ENCODE measurements at regions of chr7 and their contacts with region 1.

Region 1: GRCh38 chr7:66114793-66115649 is at the start of gene CRCP:
- DNase-seq: peak; percentile 87
- H3K4me3 Mint-ChIP-seq: peak within 1 kb of the TSS; percentile 99
- H3K27ac Mint-ChIP-seq: peak within 1 kb of the TSS; percentile 93
- H3K4me1 Mint-ChIP-seq: peaks cover 43% of the 10 kb centered on the region
- H3K27me3 Mint-ChIP-seq: no peaks in the 10 kb centered on the region
- total RNA-seq, gene CRCP: 18.5 to 19.6 TPM

Region 2: GRCh38 chr7:65872776-65873581 is 242.0 kb before region 1 on chr7 and contains the start of gene VKORC1L1:
- CTCF ChIA-PET with region 1: no interaction called
- intact Hi-C with region 1: loop called (anchors 5 kb)
- DNase-seq: peak; percentile 95
- H3K4me3 Mint-ChIP-seq: peak within 1 kb of the TSS; percentile 78
- H3K27ac Mint-ChIP-seq: no peak within 1 kb of the TSS
- H3K4me1 Mint-ChIP-seq: peaks cover 6% of the 10 kb centered on the region
- H3K27me3 Mint-ChIP-seq: no peaks in the 10 kb centered on the region
- total RNA-seq, gene VKORC1L1: 8.9 to 10.1 TPM

Region 3: GRCh38 chr7:66043681-66044497 is 71.1 kb before region 1 on chr7:
- CTCF ChIA-PET with region 1: no interaction called
- intact Hi-C with region 1: loop called (anchors 5 kb)
- DNase-seq: peak; percentile 60
- H3K4me3 Mint-ChIP-seq: peak overlapping the region; percentile 67
- H3K27ac Mint-ChIP-seq: no peak overlapping the region
- H3K4me1 Mint-ChIP-seq: peaks cover 10% of the 10 kb centered on the region
- H3K27me3 Mint-ChIP-seq: peaks cover 8% of the 10 kb centered on the region

Region 4: GRCh38 chr7:66099616-66100474 is 15.2 kb before region 1 on chr7:
- CTCF ChIA-PET with region 1: interaction called, 3 read pairs
- intact Hi-C with region 1: loop called (anchors 1 kb)
- DNase-seq: peak; percentile 64
- H3K4me3 Mint-ChIP-seq: peak overlapping the region; percentile 81
- H3K27ac Mint-ChIP-seq: peak overlapping the region; percentile 86
- H3K4me1 Mint-ChIP-seq: peaks cover 11% of the 10 kb centered on the region
- H3K27me3 Mint-ChIP-seq: no peaks in the 10 kb centered on the region

Region 5: GRCh38 chr7:66140924-66141323 is 25.9 kb after region 1 on chr7:
- CTCF ChIA-PET with region 1: no interaction called
- intact Hi-C with region 1: no loop called
- DNase-seq: no peak
- H3K4me3 Mint-ChIP-seq: no peak overlapping the region
- H3K27ac Mint-ChIP-seq: no peak overlapping the region
- H3K4me1 Mint-ChIP-seq: no peaks in the 10 kb centered on the region
- H3K27me3 Mint-ChIP-seq: no peaks in the 10 kb centered on the region

Region 6: GRCh38 chr7:67302113-67303039 is 1187.4 kb after region 1 on chr7:
- CTCF ChIA-PET with region 1: no interaction called
- intact Hi-C with region 1: loop called (anchors 10 kb)
- DNase-seq: peak; percentile 100
- H3K4me3 Mint-ChIP-seq: peak overlapping the region; percentile 89
- H3K27ac Mint-ChIP-seq: peak overlapping the region; percentile 92
- H3K4me1 Mint-ChIP-seq: peaks cover 26% of the 10 kb centered on the region
- H3K27me3 Mint-ChIP-seq: no peaks in the 10 kb centered on the region

Measured in activated naive CD4-positive, alpha-beta T cell treated with anti-CD3 and anti-CD28 coated beads for 36 hours (primary cell).